Calu3 (cell line): ENCODE measurements at regions of chr3 and their contacts with region 1.

Region 1: DNA sequence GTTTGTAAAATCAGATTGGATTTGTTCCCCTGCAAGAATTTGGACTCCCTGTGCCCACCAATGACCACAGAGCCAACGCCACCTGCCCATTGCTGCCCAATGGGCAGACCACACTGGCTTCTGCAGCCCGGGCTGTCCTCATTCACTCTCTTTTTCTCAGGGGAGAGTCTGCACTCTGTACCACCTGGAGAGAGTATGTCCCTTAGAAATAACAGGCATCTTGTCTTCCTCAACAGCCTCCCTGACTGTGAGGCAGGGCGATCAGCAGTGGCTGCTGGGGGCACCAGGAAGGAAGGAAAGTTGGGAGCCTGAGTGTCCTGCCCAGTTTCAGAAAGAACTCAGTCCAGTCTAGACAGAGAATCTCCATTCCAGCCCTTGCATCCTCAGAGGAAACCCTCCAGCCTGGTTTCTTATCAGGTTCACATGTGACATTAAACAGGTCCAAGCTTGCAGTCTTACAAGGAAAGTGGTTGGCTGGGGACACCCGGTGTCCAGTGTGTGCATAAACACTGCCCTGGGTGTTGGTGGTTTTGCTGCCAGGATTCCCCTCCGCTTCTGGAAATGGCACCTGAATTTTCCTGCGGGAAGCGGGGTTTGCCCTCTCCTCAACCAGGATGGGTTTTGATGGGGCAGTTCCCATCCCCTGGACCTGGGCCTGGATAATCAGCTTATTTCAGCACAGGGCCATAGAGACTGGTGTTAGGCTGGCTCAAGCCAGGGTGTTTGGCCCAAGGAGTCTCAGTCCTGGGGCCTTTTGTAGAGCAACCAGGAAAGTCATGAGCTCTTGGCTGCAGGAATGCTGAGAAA is 37.2 kb downstream of the SSUH2 start:
- DNase-seq: peak; percentile 38
- H3K4me3 Mint-ChIP-seq: no peak overlapping the region
- H3K27ac Mint-ChIP-seq: no peak overlapping the region
- H3K4me1 Mint-ChIP-seq: no peaks in the 10 kb centered on the region
- H3K27me3 Mint-ChIP-seq: no peaks in the 10 kb centered on the region
- CTCF ChIP-seq: peak; percentile 25

Region 2: GRCh38 chr3:8441969-8442559 is 165.4 kb before region 1 on chr3:
- CTCF ChIA-PET with region 1: no interaction called
- intact Hi-C with region 1: loop called (anchors 1 kb)
- DNase-seq: peak; percentile 28
- H3K4me3 Mint-ChIP-seq: no peak overlapping the region
- H3K27ac Mint-ChIP-seq: no peak overlapping the region
- H3K4me1 Mint-ChIP-seq: peaks cover 24% of the 10 kb centered on the region
- H3K27me3 Mint-ChIP-seq: no peaks in the 10 kb centered on the region
- CTCF ChIP-seq: peak; percentile 44